Right lobe of liver (tissue), 6 donors: ENCODE measurements at regions of chr4 and their contacts with region 1.

Region 1: GRCh38 chr4:184538023-184538599 is 63.8 kb upstream of the IRF2 start:
- DNase-seq: peak; percentile 83 to 89 (median 84)
- ATAC-seq: peak; percentile 80 to 90 (median 80)
- H3K4me3 ChIP-seq: peak overlapping the region; percentile 52 to 80 (median 76)
- H3K27ac ChIP-seq: peak overlapping the region; percentile 83 to 92 (median 92)
- H3K4me1 ChIP-seq: peaks cover 0 to 30% (median 2%) of the 10 kb centered on the region in 4 donors
- H3K27me3 ChIP-seq: no peaks in the 10 kb centered on the region
- CTCF ChIP-seq: peak; percentile 59 to 72 (median 68)
- POLR2A ChIP-seq: no peak

Region 2: GRCh38 chr4:184474263-184475095 is 63.6 kb before region 1 on chr4 and contains the start of gene IRF2:
- intact Hi-C with region 1: loop called in 1 of 2 experiments (anchors 10 kb)
- DNase-seq: peak; percentile 98
- ATAC-seq: peak; percentile 71 to 83 (median 75)
- H3K4me3 ChIP-seq: peak within 1 kb of the TSS; percentile 83 to 91 (median 84)
- H3K27ac ChIP-seq: peak within 1 kb of the TSS; percentile 97 to 99 (median 98)
- H3K4me1 ChIP-seq: peaks cover 0 to 63% (median 28%) of the 10 kb centered on the region in 4 donors
- H3K27me3 ChIP-seq: no peaks in the 10 kb centered on the region
- CTCF ChIP-seq: peak in 1 of 4 donors; percentile 13
- POLR2A ChIP-seq: peak; percentile 94
- total RNA-seq, gene IRF2: 16.9 to 29.0 (median 21.3) TPM

Region 3: GRCh38 chr4:184487513-184487912 is 50.6 kb before region 1 on chr4:
- intact Hi-C with region 1: loop called in 1 of 2 experiments (anchors 10 kb)
- DNase-seq: no peak
- ATAC-seq: no peak
- H3K4me3 ChIP-seq: no peak overlapping the region
- H3K27ac ChIP-seq: no peak overlapping the region
- H3K4me1 ChIP-seq: no peaks in the 10 kb centered on the region
- H3K27me3 ChIP-seq: no peaks in the 10 kb centered on the region
- CTCF ChIP-seq: no peak
- POLR2A ChIP-seq: no peak